Gastrocnemius medialis (tissue), 4 donors: ENCODE measurements at regions of chr7 and their contacts with region 1.

Region 1: DNA sequence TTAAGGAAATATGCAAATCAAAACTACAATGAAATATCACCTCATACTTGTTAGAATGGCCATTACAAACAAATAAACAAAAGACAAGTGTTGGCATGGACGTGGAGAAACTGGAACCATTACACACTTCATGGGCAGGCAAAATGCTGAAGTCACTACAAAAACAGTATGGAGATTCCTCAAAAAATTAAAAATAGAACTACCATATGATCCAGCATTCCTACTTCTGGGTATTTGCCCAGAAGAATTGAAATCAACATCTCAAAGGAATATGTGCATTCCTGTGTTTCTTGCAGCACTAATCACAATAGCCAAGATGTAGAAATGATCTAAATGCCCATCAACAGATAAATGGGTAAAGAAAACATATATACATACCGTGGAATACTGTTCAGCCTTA is 83.6 kb downstream of the NRCAM start:
- DNase-seq: no peak
- ATAC-seq: no peak
- H3K4me3 ChIP-seq: no peak overlapping the region
- H3K27ac ChIP-seq: no peak overlapping the region
- H3K4me1 ChIP-seq: no peaks in the 10 kb centered on the region
- H3K27me3 ChIP-seq: no peaks in the 10 kb centered on the region
- CTCF ChIP-seq: no peak
- POLR2A ChIP-seq: no peak

Region 2: GRCh38 chr7:108114117-108114841 is 258.3 kb before region 1 on chr7:
- in situ Hi-C with region 1: no loop called
- intact Hi-C with region 1: no loop called
- DNase-seq: no peak
- ATAC-seq: peak in 1 of 2 donors; percentile 76
- H3K4me3 ChIP-seq: no peak overlapping the region
- H3K27ac ChIP-seq: peak overlapping the region; percentile 26 to 65 (median 45)
- H3K4me1 ChIP-seq: no peaks in the 10 kb centered on the region
- H3K27me3 ChIP-seq: no peaks in the 10 kb centered on the region
- CTCF ChIP-seq: no peak
- POLR2A ChIP-seq: no peak

Region 3: GRCh38 chr7:108335272-108335918 is 37.2 kb before region 1 on chr7:
- in situ Hi-C with region 1: no loop called
- intact Hi-C with region 1: loop called (anchors 5 kb)
- DNase-seq: no peak
- ATAC-seq: no peak
- H3K4me3 ChIP-seq: no peak overlapping the region
- H3K27ac ChIP-seq: no peak overlapping the region
- H3K4me1 ChIP-seq: no peaks in the 10 kb centered on the region
- H3K27me3 ChIP-seq: no peaks in the 10 kb centered on the region
- CTCF ChIP-seq: no peak
- POLR2A ChIP-seq: no peak